PC-9 (cell line): ENCODE measurements at regions of chr3 and their contacts with region 1.

Region 1: GRCh38 chr3:113275929-113276750 is 64.8 kb downstream of the BOC start:
- DNase-seq: peak; percentile 76 to 82
- H3K4me3 ChIP-seq: no peak overlapping the region; the same call in 1 of the 2 replicates
- H3K27ac ChIP-seq: peak overlapping the region; percentile 53
- H3K4me1 ChIP-seq: 0 out of 2 replicates have a peak, but pooled peaks cover 8% of the 10 kb centered on the region
- H3K27me3 ChIP-seq: no peaks in the 10 kb centered on the region
- CTCF ChIP-seq: no peak; the same call in 1 of the 2 replicates

Region 2: DNA sequence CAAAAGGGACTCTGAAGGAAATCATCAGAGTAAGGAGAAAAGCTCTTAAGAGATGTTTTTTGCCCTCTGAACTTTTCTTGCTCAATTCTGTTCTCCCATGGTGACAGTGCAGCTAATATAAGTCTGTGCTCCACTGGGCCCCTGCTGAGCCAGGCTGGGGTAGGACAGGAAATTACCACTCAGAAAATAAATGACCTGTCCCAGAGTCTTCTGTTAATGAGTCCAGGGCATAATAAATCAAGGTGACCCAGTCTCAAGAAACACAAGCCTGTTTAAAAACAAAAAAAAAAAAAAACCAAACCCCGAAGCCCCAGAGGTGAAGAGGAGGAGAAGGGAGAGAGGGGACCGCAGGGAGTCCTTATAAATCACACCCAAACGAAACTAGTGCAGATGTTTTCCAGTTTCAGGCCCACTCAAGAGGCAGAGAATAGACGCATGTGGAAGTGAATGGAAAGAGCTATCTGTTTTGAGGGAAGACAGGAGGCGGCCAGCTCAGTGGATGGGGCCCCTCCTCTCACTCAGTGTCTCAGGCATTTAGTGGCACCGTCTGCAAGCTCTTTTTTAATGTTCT is 124.6 kb before region 1 on chr3:
- CTCF ChIA-PET with region 1: no interaction called
- POLR2A ChIA-PET with region 1: no interaction called
- intact Hi-C with region 1: loop called (anchors 5 kb)
- DNase-seq: no peak
- H3K4me3 ChIP-seq: no peak overlapping the region
- H3K27ac ChIP-seq: no peak overlapping the region
- H3K4me1 ChIP-seq: peaks cover 17% of the 10 kb centered on the region
- H3K27me3 ChIP-seq: no peaks in the 10 kb centered on the region
- CTCF ChIP-seq: no peak

Region 3: DNA sequence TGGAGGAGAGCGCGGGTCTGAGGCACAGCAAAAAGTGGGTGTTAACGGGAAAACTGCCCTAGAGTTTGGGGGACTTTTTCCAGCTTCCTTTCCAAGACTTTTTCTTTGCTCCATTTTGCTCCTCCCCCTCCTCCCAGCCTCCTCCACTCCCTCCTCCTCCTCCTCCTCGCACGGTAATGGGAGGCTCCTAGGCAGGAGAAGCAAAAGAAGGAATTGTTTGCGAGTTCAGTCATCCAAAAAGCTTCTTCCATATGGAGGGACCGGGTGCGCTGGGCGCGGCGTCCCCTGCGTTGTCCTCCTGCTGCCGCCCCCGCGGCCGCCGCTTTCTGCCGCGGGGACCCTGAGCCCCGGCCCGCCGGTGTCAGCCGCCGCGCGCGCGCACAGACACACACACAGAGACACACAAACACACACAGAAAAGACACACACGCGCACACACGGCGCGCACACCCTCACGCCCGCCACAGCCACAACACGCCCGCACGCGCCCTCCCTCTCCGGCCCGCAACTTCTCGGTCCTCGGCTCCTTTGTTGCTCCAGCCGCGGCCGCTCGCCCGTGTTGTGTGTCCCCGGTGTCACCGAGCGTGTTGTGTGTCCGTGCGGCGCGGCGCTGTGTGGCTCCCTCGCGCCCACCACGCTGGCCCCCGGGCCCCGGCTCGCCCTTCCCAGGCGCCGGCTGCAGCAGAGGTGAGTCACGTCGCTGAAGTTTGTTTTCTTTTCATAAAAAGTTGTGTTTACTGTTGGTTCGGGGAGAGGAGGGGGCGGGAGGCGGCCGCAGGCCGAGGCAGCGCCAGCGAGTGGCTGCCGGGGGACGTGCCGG is 64.6 kb before region 1 on chr3 and contains the start of gene BOC:
- CTCF ChIA-PET with region 1: no interaction called
- POLR2A ChIA-PET with region 1: no interaction called
- intact Hi-C with region 1: loop called (anchors 2 kb)
- DNase-seq: peak; percentile 38 to 53
- H3K4me3 ChIP-seq: peak within 1 kb of the TSS; percentile 83
- H3K27ac ChIP-seq: no peak within 1 kb of the TSS
- H3K4me1 ChIP-seq: 0 out of 2 replicates have a peak, but pooled peaks cover 5% of the 10 kb centered on the region
- H3K27me3 ChIP-seq: 0 out of 2 replicates have a peak, but pooled peaks cover 4% of the 10 kb centered on the region
- CTCF ChIP-seq: no peak
- total RNA-seq, gene BOC: 3.0 and 6.2 TPM in 2 replicates

Region 4: GRCh38 chr3:113231827-113232253 is 44.3 kb before region 1 on chr3:
- CTCF ChIA-PET with region 1: no interaction called
- POLR2A ChIA-PET with region 1: no interaction called
- intact Hi-C with region 1: loop called (anchors 5 kb)
- DNase-seq: peak; percentile 73 to 76
- H3K4me3 ChIP-seq: no peak overlapping the region
- H3K27ac ChIP-seq: 0 out of 2 replicates have a peak overlapping the region, but pooled peaks have one; percentile 42
- H3K4me1 ChIP-seq: peaks cover 10% of the 10 kb centered on the region
- H3K27me3 ChIP-seq: no peaks in the 10 kb centered on the region
- CTCF ChIP-seq: no peak